Gastrocnemius medialis (tissue), 4 donors: ENCODE measurements at regions of chr14 and their contacts with region 1.

Region 1: DNA sequence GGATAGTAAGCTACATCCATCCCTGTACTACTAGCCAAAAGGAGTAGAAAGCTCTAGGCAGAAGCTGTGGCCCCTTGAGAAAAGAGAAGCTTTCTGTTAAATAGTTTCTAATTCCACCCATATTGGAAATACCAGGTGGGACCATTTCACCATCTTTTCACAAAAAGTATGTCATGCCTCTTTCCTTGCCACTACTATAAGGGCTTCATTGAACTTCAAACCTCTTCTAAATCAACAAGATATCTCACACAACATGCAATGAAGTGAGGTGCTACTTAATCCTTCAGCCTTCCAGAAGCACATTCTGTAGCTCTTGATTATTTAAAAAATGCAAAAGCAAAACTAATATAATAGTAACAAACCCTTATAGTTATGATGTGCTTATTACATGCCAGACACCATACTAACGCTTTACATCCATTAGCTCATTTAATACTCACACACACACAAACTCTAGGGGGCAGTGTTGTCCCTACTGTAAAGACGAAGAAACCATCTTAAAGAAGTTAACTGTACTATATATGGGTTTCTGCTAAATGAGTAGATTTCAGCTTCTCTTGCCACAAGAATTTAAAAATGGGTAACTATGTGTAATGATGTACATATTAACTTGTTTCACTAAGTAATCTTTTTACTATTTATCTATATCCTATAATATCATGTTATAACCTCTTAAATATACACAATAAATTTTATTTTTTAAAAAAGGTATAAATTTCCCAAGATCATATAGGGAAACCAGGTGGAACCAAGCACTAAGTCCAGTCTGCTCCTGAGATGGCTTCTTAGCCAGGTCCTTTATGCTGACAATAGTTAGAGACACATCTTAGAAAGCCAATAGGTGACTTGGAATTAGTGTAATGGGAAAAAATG is 124.4 kb downstream of the RPS29 start:
- DNase-seq: no peak
- ATAC-seq: no peak
- H3K4me3 ChIP-seq: no peak overlapping the region
- H3K27ac ChIP-seq: no peak overlapping the region
- H3K4me1 ChIP-seq: no peaks in the 10 kb centered on the region
- H3K27me3 ChIP-seq: no peaks in the 10 kb centered on the region
- CTCF ChIP-seq: peak in 3 of 5 experiments; percentile 18 to 51 (median 34)
- POLR2A ChIP-seq: no peak

Region 2: DNA sequence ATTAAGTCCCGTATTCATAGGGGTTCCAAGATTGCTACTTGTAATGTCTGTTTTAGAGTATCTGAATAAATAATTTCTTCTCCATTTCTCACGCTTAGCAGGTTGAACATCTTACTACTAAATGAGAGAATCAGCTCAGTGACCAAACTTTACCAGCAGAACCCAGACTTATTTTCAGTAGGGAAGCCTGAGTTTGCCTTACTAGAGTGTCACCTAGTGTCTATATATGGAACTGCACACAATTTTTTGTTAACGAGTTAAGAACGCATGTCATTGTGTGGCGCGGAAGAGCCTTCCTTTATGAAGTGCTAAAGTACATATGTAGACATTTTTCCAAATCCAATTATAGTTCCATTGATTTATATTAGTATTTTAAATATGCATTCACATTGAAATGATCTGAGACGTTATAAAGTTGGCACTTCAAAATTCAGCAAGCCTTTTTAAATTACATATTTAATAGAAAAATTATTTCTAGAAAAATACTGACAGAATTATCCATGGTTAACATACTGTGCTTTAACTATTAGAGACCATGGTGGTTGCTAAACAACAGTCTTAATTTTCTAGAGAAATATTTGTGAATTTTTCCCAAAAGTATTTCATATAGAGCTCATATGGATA is 36.1 kb after region 1 on chr14:
- in situ Hi-C with region 1: no loop called
- intact Hi-C with region 1: no loop called
- DNase-seq: no peak
- ATAC-seq: no peak
- H3K4me3 ChIP-seq: no peak overlapping the region
- H3K27ac ChIP-seq: no peak overlapping the region
- H3K4me1 ChIP-seq: no peaks in the 10 kb centered on the region
- H3K27me3 ChIP-seq: no peaks in the 10 kb centered on the region
- CTCF ChIP-seq: peak in 4 of 5 experiments; percentile 31 to 68 (median 47)
- POLR2A ChIP-seq: no peak

Region 3: DNA sequence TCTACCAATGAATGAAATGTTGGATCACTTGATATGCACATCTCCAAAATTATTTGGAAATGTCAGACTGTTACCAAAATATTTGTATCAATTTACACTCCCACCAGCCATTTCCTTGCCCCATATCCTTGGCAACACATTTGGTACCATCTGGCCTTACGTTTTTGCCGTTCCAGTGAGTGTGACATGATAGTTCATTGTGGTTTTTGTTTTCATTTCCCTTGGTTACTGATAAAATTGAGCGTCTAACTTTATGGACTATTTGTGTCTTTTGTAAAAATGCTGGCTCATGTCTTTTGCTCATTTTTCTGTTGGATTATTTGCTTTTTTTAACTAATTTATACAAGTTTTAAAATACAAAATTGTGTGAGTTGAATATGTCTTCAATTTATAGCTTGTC is 242.2 kb after region 1 on chr14:
- in situ Hi-C with region 1: loop called in 1 of 4 experiments (anchors 25 kb)
- intact Hi-C with region 1: no loop called
- DNase-seq: no peak
- ATAC-seq: no peak
- H3K4me3 ChIP-seq: no peak overlapping the region
- H3K27ac ChIP-seq: no peak overlapping the region
- H3K4me1 ChIP-seq: no peaks in the 10 kb centered on the region
- H3K27me3 ChIP-seq: no peaks in the 10 kb centered on the region
- CTCF ChIP-seq: no peak
- POLR2A ChIP-seq: no peak